GM12878 (cell line): ENCODE measurements at regions of chr2 and their contacts with region 1.

Region 1: DNA sequence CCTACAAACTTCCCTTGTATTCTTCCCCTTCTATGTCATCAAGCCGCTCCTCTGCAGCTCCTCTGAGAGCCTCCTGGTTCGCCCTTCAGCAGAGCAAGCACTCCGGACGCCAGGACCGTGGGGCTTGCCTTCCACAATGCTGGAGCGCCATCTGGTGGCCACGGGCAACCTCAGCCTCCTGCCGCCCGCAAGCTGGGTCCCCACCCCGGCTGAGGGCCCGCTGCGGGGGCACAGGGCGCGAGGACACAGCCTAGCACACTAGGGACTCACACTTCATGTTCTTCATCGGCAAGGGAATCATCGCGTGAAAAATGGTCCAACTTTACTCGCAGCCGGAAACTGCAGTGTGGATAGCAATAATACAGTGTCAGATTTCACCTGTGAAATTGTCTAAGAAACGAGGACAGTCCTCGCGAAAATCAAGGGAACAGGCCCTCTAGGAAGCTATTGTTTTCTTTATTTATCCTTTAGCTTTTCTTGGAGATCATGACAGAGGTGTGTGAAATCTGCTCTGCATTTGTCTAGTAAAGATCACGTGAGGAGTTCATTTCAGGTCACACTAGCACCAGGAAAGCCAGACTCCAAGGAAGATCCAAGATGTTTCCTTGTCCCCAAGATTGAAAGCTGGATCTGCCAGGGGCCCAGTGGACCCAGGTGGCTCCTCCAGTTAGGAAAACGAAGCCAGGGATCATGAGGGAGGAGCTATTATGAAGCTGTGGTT is 5.8 kb downstream of the PRLH start:
- DNase-seq: peak; percentile 34
- ATAC-seq: peak; percentile 99
- H3K4me3 ChIP-seq: no peak overlapping the region
- H3K27ac ChIP-seq: no peak overlapping the region
- H3K4me1 ChIP-seq: no peaks in the 10 kb centered on the region
- H3K27me3 ChIP-seq: peaks cover 0 to 2% of the 10 kb centered on the region in 2 experiments; a peak in 1 of 4 replicates
- CTCF ChIP-seq: peak; percentile 94 to 99 (median 95); a peak in 5 of 6 replicates
- EP300 ChIP-seq: no peak
- POLR2A ChIP-seq: no peak
- RAD21 ChIP-seq: peak; percentile 99

Region 2: DNA sequence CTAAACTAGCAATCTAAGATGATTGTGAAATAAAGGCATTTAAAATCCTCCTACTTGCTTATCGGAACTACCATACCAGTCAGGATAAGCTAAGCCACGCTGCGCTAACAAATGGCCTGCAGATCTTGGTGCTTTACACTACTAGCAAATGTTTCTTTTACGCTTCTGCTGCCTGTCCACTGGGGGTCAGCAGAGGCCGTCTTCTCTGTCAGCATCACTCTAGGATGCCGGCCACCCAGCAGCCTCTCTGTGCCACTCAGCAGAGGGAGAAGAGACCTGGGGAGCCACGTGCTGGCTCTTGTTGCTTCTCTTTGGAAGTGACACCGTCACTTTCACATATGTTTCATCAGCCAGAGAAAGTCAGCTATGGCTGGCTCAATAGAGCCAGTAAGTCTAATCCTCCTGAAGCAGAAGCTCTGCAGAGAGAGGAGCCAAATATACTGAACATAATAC is 449.9 kb before region 1 on chr2:
- CTCF ChIA-PET with region 1: interaction called, 13 read pairs
- POLR2A ChIA-PET with region 1: no interaction called
- RAD21 ChIA-PET with region 1: interaction called, 3 read pairs
- SMC1A ChIA-PET with region 1: no interaction called
- in situ Hi-C with region 1: no loop called
- intact Hi-C with region 1: no loop called
- DNase-seq: no peak
- ATAC-seq: peak; percentile 99
- H3K4me3 ChIP-seq: no peak overlapping the region
- H3K27ac ChIP-seq: no peak overlapping the region
- H3K4me1 ChIP-seq: no peaks in the 10 kb centered on the region
- H3K27me3 ChIP-seq: no peaks in the 10 kb centered on the region
- CTCF ChIP-seq: peak; percentile 61 to 67 (median 64)
- EP300 ChIP-seq: no peak
- POLR2A ChIP-seq: no peak
- RAD21 ChIP-seq: peak; percentile 63

Region 3: GRCh38 chr2:237451643-237452469 is 120.3 kb before region 1 on chr2:
- CTCF ChIA-PET with region 1: no interaction called
- POLR2A ChIA-PET with region 1: no interaction called
- RAD21 ChIA-PET with region 1: no interaction called
- SMC1A ChIA-PET with region 1: no interaction called
- in situ Hi-C with region 1: no loop called
- intact Hi-C with region 1: no loop called
- DNase-seq: no peak
- ATAC-seq: no peak
- H3K4me3 ChIP-seq: no peak overlapping the region
- H3K27ac ChIP-seq: no peak overlapping the region
- H3K4me1 ChIP-seq: no peaks in the 10 kb centered on the region
- H3K27me3 ChIP-seq: no peaks in the 10 kb centered on the region
- CTCF ChIP-seq: no peak
- EP300 ChIP-seq: no peak
- POLR2A ChIP-seq: no peak
- RAD21 ChIP-seq: no peak

Region 4: DNA sequence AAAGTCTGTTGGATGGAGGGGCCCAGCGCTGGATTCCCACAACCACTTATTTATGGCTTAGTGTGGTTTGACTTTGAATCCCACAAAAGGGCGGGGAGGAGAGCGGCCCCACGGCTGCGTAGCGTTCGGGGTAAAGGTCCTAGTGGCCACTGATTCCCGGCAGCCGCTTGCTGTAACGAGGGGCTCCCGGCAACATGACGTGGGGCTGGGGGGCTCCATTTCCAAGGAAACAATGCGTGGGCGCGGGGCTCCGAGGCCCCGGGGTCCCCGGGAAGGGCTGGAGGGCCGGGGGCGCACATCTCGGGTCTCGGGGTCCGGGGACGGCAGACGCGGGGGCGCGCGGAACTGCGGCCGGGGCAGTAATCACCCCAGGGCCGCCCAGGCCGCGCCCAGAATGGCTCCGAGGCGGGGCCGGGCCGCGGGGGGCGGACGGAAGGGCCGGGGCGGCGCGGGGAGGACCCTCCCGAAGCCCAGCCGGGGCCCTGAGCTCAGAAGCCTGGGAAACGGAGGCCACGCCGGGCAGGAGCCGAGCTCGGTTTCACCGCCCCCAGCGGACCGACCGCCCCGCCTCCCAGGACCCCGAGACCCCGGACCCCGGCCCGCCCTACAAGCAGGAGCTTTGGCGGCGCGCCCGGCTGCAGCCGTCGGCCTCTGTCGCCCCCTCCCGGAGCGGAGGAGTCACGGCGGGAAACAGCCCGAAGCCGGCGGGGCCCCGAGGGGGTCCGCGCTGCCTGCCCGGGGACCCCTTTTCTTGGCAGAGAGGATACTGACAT is 97.1 kb before region 1 on chr2:
- CTCF ChIA-PET with region 1: interaction called, 21 read pairs
- POLR2A ChIA-PET with region 1: no interaction called
- RAD21 ChIA-PET with region 1: interaction called, 3 read pairs
- SMC1A ChIA-PET with region 1: interaction called, 3 read pairs
- in situ Hi-C with region 1: no loop called
- intact Hi-C with region 1: no loop called
- DNase-seq: no peak
- ATAC-seq: peak; percentile 98
- H3K4me3 ChIP-seq: peak overlapping the region; percentile 94
- H3K27ac ChIP-seq: no peak overlapping the region
- H3K4me1 ChIP-seq: peaks cover 6% of the 10 kb centered on the region; the same call in 1 of the 2 replicates
- H3K27me3 ChIP-seq: peaks cover 6% of the 10 kb centered on the region in 2 experiments; a peak in 3 of 4 replicates
- CTCF ChIP-seq: peak; percentile 76 to 91 (median 85)
- EP300 ChIP-seq: no peak
- POLR2A ChIP-seq: 0 out of 2 replicates have a peak, but pooled peaks have one; percentile 52
- RAD21 ChIP-seq: peak; percentile 78

Region 5: DNA sequence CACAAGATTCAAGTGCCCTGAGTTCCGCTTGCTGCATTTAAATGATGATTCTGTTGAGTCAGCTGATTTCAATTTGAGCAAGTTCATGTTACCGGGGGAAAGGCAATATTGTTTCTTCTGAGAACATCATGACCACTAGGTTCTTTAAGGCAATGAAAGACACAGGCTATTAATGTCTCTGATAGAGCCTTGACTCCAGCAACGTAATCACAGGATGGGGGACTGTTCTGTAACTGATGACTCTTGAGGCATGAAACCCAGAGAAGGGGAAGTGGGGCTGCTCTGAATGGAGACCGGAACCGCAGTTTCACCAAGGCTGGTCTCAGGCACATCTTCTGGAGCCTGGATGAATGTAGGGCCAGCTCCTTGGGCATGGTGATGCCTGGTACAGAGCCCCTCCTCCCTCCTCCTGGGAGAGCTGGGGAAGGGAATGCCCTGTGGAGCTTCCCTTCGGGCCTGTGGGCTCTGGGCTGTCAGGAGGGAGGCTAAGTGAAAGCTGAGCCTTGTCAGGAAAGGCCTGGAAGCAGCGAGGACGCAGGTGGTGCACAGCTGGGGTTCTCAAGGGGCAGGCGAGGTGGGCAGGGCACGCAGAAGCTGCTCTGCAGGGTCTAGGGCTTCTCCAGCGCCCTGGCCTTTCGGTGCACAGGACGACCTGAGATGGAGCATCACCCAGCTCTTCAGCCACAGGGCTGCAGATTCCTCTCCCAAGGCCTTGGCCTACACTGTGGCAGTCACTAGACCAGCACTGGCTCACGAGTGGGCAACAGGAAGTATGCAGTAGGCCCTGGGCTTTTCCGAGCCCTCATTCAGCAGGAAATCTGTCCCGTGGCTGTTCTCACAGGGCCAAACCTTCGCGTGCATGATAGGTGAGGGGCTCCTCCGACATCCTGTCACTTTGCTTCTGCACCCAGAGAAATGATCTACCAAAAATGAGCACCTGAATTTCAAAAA is 42.5 kb before region 1 on chr2:
- CTCF ChIA-PET with region 1: interaction called, 13 read pairs
- POLR2A ChIA-PET with region 1: interaction called, 3 read pairs
- RAD21 ChIA-PET with region 1: interaction called, 14 read pairs
- SMC1A ChIA-PET with region 1: interaction called, 5 read pairs
- in situ Hi-C with region 1: no loop called
- intact Hi-C with region 1: no loop called
- DNase-seq: peak; percentile 73
- ATAC-seq: peak; percentile 98
- H3K4me3 ChIP-seq: no peak overlapping the region
- H3K27ac ChIP-seq: 0 out of 2 replicates have a peak overlapping the region, but pooled peaks have one; percentile 13
- H3K4me1 ChIP-seq: peaks cover 21% of the 10 kb centered on the region
- H3K27me3 ChIP-seq: no peaks in the 10 kb centered on the region
- CTCF ChIP-seq: no peak
- EP300 ChIP-seq: peak in 1 of 2 experiments; percentile 37; a peak in 1 of 4 replicates
- POLR2A ChIP-seq: no peak
- RAD21 ChIP-seq: no peak

Region 6: DNA sequence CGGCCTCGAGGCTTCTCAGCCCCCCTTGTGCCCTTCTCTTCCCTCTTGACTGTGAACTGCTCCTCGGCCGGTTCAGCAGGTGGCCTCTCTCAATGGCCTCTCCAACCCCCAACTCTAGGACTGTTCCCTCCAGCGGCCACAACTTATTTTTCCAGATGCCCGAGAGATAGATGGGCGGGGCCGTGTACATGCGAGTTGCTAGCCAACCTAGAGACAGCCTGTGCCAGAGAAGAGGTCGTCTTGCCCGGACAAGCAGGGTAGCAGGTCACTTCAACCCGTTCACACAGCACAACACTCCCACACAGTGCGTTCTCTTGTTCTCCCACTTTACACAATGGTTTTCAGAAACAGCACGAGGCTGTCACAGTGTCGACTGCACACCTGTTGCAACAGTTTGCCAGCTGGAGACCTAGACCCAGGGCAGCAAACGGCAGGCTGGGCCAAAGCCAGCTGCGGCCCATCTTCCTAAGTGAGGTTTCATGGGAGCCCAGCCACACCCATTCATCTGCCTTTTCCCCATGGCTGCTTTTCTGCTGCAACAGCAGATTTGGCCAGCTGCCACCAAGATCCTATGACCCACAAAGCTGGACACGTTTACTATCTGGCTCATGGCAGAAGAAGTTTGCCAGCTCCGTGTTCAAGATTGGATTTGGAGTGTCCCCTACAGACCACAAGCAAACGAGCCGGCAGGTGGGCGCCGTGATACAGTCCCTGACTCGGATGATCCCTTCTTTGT is 13.1 kb before region 1 on chr2:
- CTCF ChIA-PET with region 1: interaction called, 38 read pairs
- POLR2A ChIA-PET with region 1: no interaction called
- RAD21 ChIA-PET with region 1: interaction called, 15 read pairs
- SMC1A ChIA-PET with region 1: interaction called, 44 read pairs
- in situ Hi-C with region 1: no loop called
- intact Hi-C with region 1: no loop called
- DNase-seq: no peak
- ATAC-seq: no peak
- H3K4me3 ChIP-seq: no peak overlapping the region
- H3K27ac ChIP-seq: no peak overlapping the region
- H3K4me1 ChIP-seq: peaks cover 19% of the 10 kb centered on the region
- H3K27me3 ChIP-seq: no peaks in the 10 kb centered on the region
- CTCF ChIP-seq: no peak
- EP300 ChIP-seq: no peak
- POLR2A ChIP-seq: no peak
- RAD21 ChIP-seq: no peak

Region 7: GRCh38 chr2:237682151-237682550 is 110.0 kb after region 1 on chr2:
- CTCF ChIA-PET with region 1: no interaction called
- POLR2A ChIA-PET with region 1: no interaction called
- RAD21 ChIA-PET with region 1: no interaction called
- SMC1A ChIA-PET with region 1: no interaction called
- in situ Hi-C with region 1: no loop called
- intact Hi-C with region 1: no loop called
- DNase-seq: no peak
- ATAC-seq: no peak
- H3K4me3 ChIP-seq: no peak overlapping the region
- H3K27ac ChIP-seq: no peak overlapping the region
- H3K4me1 ChIP-seq: peaks cover 5% of the 10 kb centered on the region
- H3K27me3 ChIP-seq: no peaks in the 10 kb centered on the region
- CTCF ChIP-seq: no peak
- EP300 ChIP-seq: no peak
- POLR2A ChIP-seq: no peak
- RAD21 ChIP-seq: no peak

Region 8: DNA sequence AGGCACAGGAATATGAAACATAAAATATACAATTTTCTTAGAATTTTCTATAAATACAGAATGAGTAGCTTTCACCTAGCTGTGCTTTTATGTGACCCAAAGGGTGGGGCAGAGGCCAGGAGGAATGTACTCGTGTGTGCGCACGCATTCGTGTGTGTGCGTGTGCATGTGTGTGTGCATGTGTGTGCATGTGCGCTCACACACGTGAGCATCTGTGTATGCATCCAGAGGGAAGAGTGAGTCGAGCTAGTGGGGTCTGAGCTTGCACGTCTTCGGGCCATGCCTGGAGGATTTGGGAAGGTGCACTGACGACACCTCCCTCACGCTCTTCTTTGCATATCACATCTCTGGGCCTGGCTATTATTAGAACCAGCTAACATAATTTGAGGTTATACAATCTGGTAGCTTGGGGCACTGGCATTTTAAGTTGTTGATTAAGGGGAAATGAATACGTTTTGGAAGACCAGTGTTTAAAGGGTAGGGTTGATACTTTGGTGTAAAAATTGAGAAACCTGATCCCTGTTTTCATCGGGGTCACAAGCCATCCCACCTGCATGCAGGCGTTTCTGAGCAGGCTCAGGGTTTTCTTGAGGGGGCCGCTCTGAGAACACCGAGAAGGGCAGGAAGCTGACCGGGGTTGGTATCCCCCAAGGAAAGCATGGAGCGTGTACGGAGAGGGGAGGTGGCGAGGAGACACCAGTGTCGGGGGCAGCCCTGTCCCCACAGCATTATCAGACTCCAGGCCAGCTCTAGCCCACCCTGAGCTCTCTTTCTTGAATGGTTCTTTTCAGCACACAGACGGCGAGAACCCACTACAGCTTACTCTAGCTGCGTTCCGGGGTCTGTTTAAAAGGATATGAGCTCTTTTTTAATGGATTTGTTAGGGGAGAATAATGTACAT is 140.5 kb after region 1 on chr2:
- CTCF ChIA-PET with region 1: no interaction called
- POLR2A ChIA-PET with region 1: no interaction called
- RAD21 ChIA-PET with region 1: no interaction called
- SMC1A ChIA-PET with region 1: no interaction called
- in situ Hi-C with region 1: no loop called
- intact Hi-C with region 1: no loop called
- DNase-seq: no peak
- ATAC-seq: no peak
- H3K4me3 ChIP-seq: no peak overlapping the region
- H3K27ac ChIP-seq: no peak overlapping the region
- H3K4me1 ChIP-seq: no peaks in the 10 kb centered on the region
- H3K27me3 ChIP-seq: no peaks in the 10 kb centered on the region
- CTCF ChIP-seq: no peak
- EP300 ChIP-seq: no peak
- POLR2A ChIP-seq: peak; percentile 45; the same call in 1 of the 2 replicates
- RAD21 ChIP-seq: no peak

Region 9: DNA sequence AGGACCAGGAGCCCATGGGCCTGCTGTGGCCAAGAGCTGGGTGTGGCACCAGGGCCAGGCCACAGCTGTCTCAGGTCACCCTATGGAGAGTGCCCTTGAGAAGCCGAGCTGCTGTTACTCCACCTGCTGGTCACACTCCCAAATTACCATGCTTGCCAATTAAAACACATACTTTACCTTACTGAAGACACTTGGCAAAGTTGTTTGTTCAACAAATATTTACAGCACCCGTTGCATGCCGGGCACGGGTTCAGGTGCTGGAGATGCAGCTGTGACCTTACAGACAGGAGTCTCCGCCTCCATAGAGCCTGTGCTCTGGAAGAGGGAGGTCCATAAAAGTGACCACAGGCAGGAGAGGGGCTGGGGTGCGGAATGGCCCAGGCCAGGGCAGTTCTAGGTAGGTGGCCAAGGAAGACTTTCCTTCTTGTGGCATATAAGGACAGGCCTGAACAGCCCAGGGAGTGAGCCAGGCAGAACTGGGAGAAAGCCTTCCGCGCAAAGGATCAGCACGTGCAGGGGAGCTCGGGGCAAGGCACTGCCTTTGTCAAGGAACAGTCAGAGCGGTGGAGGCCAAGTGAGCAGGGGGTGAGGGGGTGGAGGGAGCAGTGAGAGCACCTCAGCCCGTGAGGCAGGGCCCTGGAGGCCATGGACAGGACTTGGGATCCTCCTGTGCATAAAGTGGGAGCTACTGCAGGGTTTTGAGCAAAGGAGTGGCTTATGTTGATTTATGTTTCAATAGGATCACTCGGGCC is 202.8 kb after region 1 on chr2:
- CTCF ChIA-PET with region 1: no interaction called
- POLR2A ChIA-PET with region 1: no interaction called
- RAD21 ChIA-PET with region 1: interaction called, 4 read pairs
- SMC1A ChIA-PET with region 1: no interaction called
- in situ Hi-C with region 1: no loop called
- intact Hi-C with region 1: loop called (anchors 2 kb)
- DNase-seq: peak; percentile 11
- ATAC-seq: peak; percentile 99
- H3K4me3 ChIP-seq: no peak overlapping the region
- H3K27ac ChIP-seq: no peak overlapping the region
- H3K4me1 ChIP-seq: no peaks in the 10 kb centered on the region
- H3K27me3 ChIP-seq: no peaks in the 10 kb centered on the region
- CTCF ChIP-seq: peak; percentile 64 to 73 (median 71); a peak in 5 of 6 replicates
- EP300 ChIP-seq: no peak
- POLR2A ChIP-seq: 0 out of 2 replicates have a peak, but pooled peaks have one; percentile 33
- RAD21 ChIP-seq: peak; percentile 55